ENCODE measurements at regions of chr17 and their contacts with region 1.

Region 1: GRCh38 chr17:74790161-74791054 is 14.3 kb upstream of the NAT9 start:
- DNase-seq: peak in 1 of 9 experiments; percentile 27
- ATAC-seq: no peak
- H3K4me3 ChIP-seq: peak overlapping the region in 1 of 2 experiments; percentile 5
- H3K4me3 Mint-ChIP-seq: peak overlapping the region; percentile 57
- H3K27ac ChIP-seq: no peak overlapping the region
- H3K27ac Mint-ChIP-seq: peak overlapping the region; percentile 71
- H3K4me1 ChIP-seq: peaks cover 33% of the 10 kb centered on the region
- H3K4me1 Mint-ChIP-seq: peaks cover 40% of the 10 kb centered on the region
- H3K27me3 ChIP-seq: no peaks in the 10 kb centered on the region
- H3K27me3 Mint-ChIP-seq: no peaks in the 10 kb centered on the region
- CTCF ChIP-seq: no peak

Region 2: GRCh38 chr17:74635418-74635817 is 155.0 kb before region 1 on chr17:
- CTCF ChIA-PET with region 1: no interaction called
- POLR2A ChIA-PET with region 1: no interaction called
- intact Hi-C with region 1: no loop called
- DNase-seq: no peak
- ATAC-seq: no peak
- H3K4me3 ChIP-seq: no peak overlapping the region
- H3K4me3 Mint-ChIP-seq: no peak overlapping the region
- H3K27ac ChIP-seq: no peak overlapping the region
- H3K27ac Mint-ChIP-seq: no peak overlapping the region
- H3K4me1 ChIP-seq: peaks cover 10% of the 10 kb centered on the region
- H3K4me1 Mint-ChIP-seq: peaks cover 13% of the 10 kb centered on the region
- H3K27me3 ChIP-seq: peaks cover 2 to 11% of the 10 kb centered on the region in 2 experiments
- H3K27me3 Mint-ChIP-seq: peaks cover 25% of the 10 kb centered on the region
- CTCF ChIP-seq: no peak

Region 3: DNA sequence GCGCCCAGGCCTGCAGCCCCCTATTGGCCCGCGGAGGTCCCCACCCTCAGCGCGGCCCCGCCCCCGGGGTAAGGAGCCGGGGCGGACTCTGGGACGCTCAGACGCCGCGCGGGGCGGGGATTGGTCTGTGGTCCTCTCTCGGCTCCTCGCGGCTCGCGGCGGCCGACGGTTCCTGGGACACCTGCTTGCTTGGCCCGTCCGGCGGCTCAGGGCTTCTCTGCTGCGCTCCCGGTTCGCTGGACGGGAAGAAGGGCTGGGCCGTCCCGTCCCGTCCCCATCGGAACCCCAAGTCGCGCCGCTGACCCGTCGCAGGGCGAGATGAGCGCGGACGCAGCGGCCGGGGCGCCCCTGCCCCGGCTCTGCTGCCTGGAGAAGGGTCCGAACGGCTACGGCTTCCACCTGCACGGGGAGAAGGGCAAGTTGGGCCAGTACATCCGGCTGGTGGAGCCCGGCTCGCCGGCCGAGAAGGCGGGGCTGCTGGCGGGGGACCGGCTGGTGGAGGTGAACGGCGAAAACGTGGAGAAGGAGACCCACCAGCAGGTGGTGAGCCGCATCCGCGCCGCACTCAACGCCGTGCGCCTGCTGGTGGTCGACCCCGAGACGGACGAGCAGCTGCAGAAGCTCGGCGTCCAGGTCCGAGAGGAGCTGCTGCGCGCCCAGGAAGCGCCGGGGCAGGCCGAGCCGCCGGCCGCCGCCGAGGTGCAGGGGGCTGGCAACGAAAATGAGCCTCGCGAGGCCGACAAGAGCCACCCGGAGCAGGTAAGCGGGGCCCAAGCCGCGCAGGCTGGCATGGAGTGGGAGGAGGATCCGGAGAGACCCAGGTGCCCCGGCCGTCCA is 41.7 kb before region 1 on chr17 and contains the start of gene NHERF1:
- CTCF ChIA-PET with region 1: interaction called, 47 read pairs
- POLR2A ChIA-PET with region 1: interaction called, 3 read pairs
- intact Hi-C with region 1: loop called in 1 of 2 experiments (anchors 1 kb)
- DNase-seq: peak; percentile 83 to 98 (median 92)
- ATAC-seq: peak; percentile 83
- H3K4me3 ChIP-seq: peak within 1 kb of the TSS; percentile 94 to 98
- H3K4me3 Mint-ChIP-seq: peak within 1 kb of the TSS; percentile 98
- H3K27ac ChIP-seq: peak within 1 kb of the TSS; percentile 60 to 80
- H3K27ac Mint-ChIP-seq: peak within 1 kb of the TSS; percentile 96
- H3K4me1 ChIP-seq: peaks cover 61% of the 10 kb centered on the region
- H3K4me1 Mint-ChIP-seq: peaks cover 67% of the 10 kb centered on the region
- H3K27me3 ChIP-seq: no peaks in the 10 kb centered on the region
- H3K27me3 Mint-ChIP-seq: no peaks in the 10 kb centered on the region
- CTCF ChIP-seq: no peak
- total RNA-seq, gene NHERF1: 72.5 to 73.7 TPM

Region 4: GRCh38 chr17:74770498-74771318 is 19.7 kb before region 1 on chr17:
- CTCF ChIA-PET with region 1: interaction called, 23 read pairs
- POLR2A ChIA-PET with region 1: interaction called, 8 read pairs
- intact Hi-C with region 1: no loop called
- DNase-seq: peak; percentile 62 to 88 (median 78)
- ATAC-seq: peak; percentile 95
- H3K4me3 ChIP-seq: no peak overlapping the region
- H3K4me3 Mint-ChIP-seq: no peak overlapping the region
- H3K27ac ChIP-seq: peak overlapping the region in 1 of 2 experiments; percentile 18
- H3K27ac Mint-ChIP-seq: peak overlapping the region; percentile 81
- H3K4me1 ChIP-seq: peaks cover 21% of the 10 kb centered on the region
- H3K4me1 Mint-ChIP-seq: peaks cover 36% of the 10 kb centered on the region
- H3K27me3 ChIP-seq: no peaks in the 10 kb centered on the region
- H3K27me3 Mint-ChIP-seq: no peaks in the 10 kb centered on the region
- CTCF ChIP-seq: peak; percentile 70

Region 5: DNA sequence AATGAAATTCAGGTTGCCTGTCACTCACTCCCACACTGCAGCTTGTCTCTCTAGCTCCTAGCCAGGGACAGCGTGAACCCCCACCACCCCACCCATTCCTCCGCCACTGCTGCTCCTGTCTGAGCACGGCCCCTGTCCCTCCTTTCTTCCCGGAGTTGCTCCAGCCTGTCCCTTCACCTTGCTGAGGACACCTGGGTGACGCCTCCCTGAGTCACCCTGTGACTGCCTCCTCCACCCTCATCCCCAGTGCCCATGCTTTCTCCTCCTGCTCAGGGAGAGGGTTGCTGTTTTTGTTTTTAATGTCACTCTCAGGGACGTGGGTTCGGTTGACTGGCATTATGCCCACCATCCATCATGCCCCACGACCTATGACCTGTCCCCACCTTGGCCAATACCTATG is 11.5 kb after region 1 on chr17:
- CTCF ChIA-PET with region 1: interaction called, 39 read pairs
- POLR2A ChIA-PET with region 1: no interaction called
- intact Hi-C with region 1: no loop called
- DNase-seq: no peak
- ATAC-seq: no peak
- H3K4me3 ChIP-seq: no peak overlapping the region
- H3K4me3 Mint-ChIP-seq: no peak overlapping the region
- H3K27ac ChIP-seq: no peak overlapping the region
- H3K27ac Mint-ChIP-seq: no peak overlapping the region
- H3K4me1 ChIP-seq: no peaks in the 10 kb centered on the region
- H3K4me1 Mint-ChIP-seq: peaks cover 2% of the 10 kb centered on the region
- H3K27me3 ChIP-seq: no peaks in the 10 kb centered on the region
- H3K27me3 Mint-ChIP-seq: no peaks in the 10 kb centered on the region
- CTCF ChIP-seq: no peak

Region 6: DNA sequence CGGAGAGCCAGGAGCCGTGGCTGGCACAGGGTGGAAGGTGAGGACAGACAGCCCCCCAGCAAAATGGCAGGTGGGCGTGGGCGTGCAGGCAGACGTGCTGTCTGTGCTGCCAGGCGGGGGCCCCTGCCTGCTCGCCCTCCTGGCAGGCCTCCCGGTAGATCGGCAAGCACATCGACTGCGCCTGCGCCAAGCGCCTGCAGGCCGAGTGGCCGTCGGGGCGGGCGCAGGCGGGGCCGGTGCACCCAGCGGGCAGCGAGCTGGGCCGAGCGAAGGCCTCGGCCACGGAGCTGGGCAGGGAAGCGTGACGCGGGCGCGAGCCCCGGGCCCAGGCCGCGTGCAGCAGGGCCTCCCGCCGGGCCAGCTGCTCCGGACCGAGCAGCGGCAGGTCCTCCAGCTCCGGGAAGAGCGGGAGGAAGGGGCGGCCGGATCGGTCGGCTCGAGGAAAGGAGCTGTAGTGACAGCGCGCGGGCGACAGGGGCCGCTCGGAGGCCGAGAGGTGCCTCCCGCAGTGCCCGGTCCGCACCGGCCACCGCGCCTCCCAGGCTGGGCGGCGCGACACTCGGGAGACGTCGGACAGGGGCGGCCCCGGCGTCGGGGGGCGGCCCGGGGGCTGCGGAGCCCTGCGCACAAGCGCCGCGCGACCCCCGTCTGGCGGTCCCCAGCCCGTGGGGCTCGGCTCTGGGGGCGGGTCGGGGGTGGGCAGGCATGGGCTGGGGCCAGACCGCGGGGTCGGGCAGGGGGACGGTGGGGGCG is 52.4 kb after region 1 on chr17:
- CTCF ChIA-PET with region 1: interaction called, 13 read pairs
- POLR2A ChIA-PET with region 1: no interaction called
- intact Hi-C with region 1: no loop called
- DNase-seq: peak in 2 of 9 experiments; percentile 22 to 31
- ATAC-seq: peak; percentile 34
- H3K4me3 ChIP-seq: no peak overlapping the region
- H3K4me3 Mint-ChIP-seq: no peak overlapping the region
- H3K27ac ChIP-seq: no peak overlapping the region
- H3K27ac Mint-ChIP-seq: no peak overlapping the region
- H3K4me1 ChIP-seq: no peaks in the 10 kb centered on the region
- H3K4me1 Mint-ChIP-seq: peaks cover 19% of the 10 kb centered on the region
- H3K27me3 ChIP-seq: peaks cover 0 to 6% of the 10 kb centered on the region in 2 experiments
- H3K27me3 Mint-ChIP-seq: peaks cover 11% of the 10 kb centered on the region
- CTCF ChIP-seq: peak; percentile 20

Region 7: DNA sequence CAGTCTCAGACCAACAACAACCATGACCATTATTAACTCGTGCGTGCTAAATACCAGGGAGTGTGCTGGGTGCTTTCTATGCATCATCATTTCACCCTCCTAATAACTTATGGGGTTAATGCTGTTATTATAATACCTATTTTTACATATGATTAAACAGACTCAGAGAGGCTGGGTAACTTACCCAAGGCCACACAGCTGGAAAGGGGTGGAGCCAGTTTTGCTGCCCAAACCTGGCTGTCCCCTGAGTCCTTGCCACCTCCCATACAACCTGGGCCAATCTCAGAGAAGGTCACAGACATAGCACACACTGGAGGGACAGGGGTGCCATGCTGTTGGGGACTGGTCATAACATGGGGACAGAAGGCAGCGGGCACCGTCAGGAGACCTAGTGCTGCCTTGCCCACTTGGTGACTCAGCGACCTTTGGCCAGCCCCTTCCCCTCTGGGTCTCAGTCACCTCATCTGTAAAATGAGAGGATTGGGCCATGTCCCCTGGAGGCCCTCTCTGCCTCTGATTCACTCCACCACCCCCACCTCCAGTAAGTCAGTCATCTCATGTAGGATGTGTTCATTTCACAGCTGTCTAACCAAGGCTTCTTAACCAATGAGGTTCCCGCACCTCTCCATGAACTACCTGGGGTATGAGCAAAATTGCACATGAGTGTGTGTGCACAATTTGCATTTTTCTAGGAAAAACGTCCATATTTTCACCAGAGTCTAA is 114.4 kb after region 1 on chr17:
- CTCF ChIA-PET with region 1: no interaction called
- POLR2A ChIA-PET with region 1: no interaction called
- intact Hi-C with region 1: no loop called
- DNase-seq: no peak
- ATAC-seq: no peak
- H3K4me3 ChIP-seq: no peak overlapping the region
- H3K4me3 Mint-ChIP-seq: no peak overlapping the region
- H3K27ac ChIP-seq: no peak overlapping the region
- H3K27ac Mint-ChIP-seq: no peak overlapping the region
- H3K4me1 ChIP-seq: no peaks in the 10 kb centered on the region
- H3K4me1 Mint-ChIP-seq: no peaks in the 10 kb centered on the region
- H3K27me3 ChIP-seq: peaks cover 0 to 2% of the 10 kb centered on the region in 2 experiments
- H3K27me3 Mint-ChIP-seq: peaks cover 17% of the 10 kb centered on the region
- CTCF ChIP-seq: no peak

Measured in CD8-positive, alpha-beta T cell (primary cell).